HEK293 (cell line): ENCODE measurements at regions of chr6 and their contacts with region 1.

Region 1: DNA sequence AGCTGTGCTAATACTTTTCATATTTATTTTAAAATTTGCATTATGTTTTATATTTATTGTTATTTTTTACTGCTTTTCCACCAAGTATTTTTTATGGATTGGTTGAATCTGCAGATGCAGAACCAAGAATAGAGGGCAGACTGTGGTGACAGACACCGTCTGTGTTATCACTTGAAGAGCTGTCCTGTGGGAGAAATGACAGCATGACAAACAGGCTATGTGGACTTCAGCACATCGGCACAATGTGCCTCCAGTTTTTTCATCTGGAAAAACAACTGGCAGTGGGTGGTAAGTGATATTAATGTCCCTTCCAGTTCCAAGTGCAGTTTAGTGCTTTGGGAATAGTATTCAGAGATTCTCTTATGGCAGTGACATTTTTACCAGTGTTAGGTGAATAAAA is 492.9 kb downstream of the PRKN start:
- H3K4me3 ChIP-seq: no peak overlapping the region
- H3K27ac ChIP-seq: no peak overlapping the region
- H3K4me1 ChIP-seq: no peaks in the 10 kb centered on the region
- CTCF ChIP-seq: no peak

Region 2: DNA sequence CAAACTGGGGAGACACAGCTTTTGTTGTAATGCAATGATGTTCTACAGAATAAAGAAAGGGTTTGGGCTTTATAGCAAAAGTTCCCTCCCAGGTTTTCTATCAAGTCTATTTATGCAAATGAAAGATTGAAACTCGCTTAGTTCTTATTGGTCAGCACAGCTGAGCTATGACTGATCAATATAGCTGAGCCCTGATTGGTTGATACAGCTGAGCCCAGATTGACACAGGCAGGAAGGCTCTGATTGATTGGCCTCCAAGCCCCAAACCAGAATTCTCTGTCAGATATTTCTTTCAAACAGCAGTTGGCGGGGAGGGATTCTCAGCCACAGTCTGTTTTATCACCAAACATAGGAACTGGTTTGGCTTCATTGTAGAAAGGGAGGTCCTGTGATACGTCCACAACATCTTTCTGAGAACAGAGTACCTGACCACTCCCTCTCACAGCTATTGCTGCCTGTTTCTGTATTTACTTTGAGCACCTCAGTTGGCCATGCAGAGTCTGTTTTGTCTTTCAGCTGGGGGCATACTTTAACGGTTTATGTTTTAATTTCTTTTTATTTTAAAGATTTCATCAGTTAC is 716.6 kb after region 1 on chr6:
- CTCF ChIA-PET with region 1: interaction called, 13 read pairs
- POLR2A ChIA-PET with region 1: no interaction called
- H3K4me3 ChIP-seq: no peak overlapping the region
- H3K27ac ChIP-seq: no peak overlapping the region
- H3K4me1 ChIP-seq: no peaks in the 10 kb centered on the region
- CTCF ChIP-seq: no peak